ENCODE measurements at regions of chr5 and their contacts with region 1.

Region 1: DNA sequence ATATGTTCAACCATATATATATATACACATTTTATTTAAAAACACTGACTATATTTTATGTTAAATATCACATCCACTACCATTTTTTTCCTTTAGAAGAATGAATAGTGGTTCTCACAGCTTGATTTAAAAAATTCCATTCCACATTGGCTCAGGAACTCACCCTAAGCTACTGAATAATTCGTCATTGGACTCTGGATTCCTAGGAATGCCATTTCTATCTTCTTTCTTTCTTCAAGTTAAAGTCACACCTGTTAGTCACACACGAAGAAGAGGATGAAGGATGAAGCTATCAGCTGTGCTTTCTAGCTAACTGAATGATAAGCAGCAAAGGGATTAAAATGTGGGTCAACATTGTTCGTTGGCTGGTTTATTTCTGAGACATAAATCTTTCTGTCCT is 7.9 kb downstream of the ELOVL7 start:
- DNase-seq: no peak
- H3K4me3 ChIP-seq: no peak overlapping the region
- H3K4me3 Mint-ChIP-seq: no peak overlapping the region
- H3K27ac Mint-ChIP-seq: no peak overlapping the region
- H3K4me1 ChIP-seq: peaks cover 30% of the 10 kb centered on the region
- H3K4me1 Mint-ChIP-seq: peaks cover 26% of the 10 kb centered on the region
- H3K27me3 ChIP-seq: no peaks in the 10 kb centered on the region
- H3K27me3 Mint-ChIP-seq: no peaks in the 10 kb centered on the region
- CTCF ChIP-seq: no peak

Region 2: GRCh38 chr5:60704626-60705025 is 131.5 kb before region 1 on chr5:
- CTCF ChIA-PET with region 1: no interaction called
- POLR2A ChIA-PET with region 1: no interaction called
- intact Hi-C with region 1: no loop called
- DNase-seq: no peak
- H3K4me3 ChIP-seq: no peak overlapping the region
- H3K4me3 Mint-ChIP-seq: no peak overlapping the region
- H3K27ac Mint-ChIP-seq: no peak overlapping the region
- H3K4me1 ChIP-seq: peaks cover 13% of the 10 kb centered on the region
- H3K4me1 Mint-ChIP-seq: no peaks in the 10 kb centered on the region
- H3K27me3 ChIP-seq: no peaks in the 10 kb centered on the region
- H3K27me3 Mint-ChIP-seq: no peaks in the 10 kb centered on the region
- CTCF ChIP-seq: no peak

Region 3: GRCh38 chr5:60794691-60795090 is 41.4 kb before region 1 on chr5:
- CTCF ChIA-PET with region 1: no interaction called
- POLR2A ChIA-PET with region 1: no interaction called
- intact Hi-C with region 1: no loop called
- DNase-seq: no peak
- H3K4me3 ChIP-seq: no peak overlapping the region
- H3K4me3 Mint-ChIP-seq: no peak overlapping the region
- H3K27ac Mint-ChIP-seq: no peak overlapping the region
- H3K4me1 ChIP-seq: no peaks in the 10 kb centered on the region
- H3K4me1 Mint-ChIP-seq: no peaks in the 10 kb centered on the region
- H3K27me3 ChIP-seq: no peaks in the 10 kb centered on the region
- H3K27me3 Mint-ChIP-seq: no peaks in the 10 kb centered on the region
- CTCF ChIP-seq: no peak

Region 4: DNA sequence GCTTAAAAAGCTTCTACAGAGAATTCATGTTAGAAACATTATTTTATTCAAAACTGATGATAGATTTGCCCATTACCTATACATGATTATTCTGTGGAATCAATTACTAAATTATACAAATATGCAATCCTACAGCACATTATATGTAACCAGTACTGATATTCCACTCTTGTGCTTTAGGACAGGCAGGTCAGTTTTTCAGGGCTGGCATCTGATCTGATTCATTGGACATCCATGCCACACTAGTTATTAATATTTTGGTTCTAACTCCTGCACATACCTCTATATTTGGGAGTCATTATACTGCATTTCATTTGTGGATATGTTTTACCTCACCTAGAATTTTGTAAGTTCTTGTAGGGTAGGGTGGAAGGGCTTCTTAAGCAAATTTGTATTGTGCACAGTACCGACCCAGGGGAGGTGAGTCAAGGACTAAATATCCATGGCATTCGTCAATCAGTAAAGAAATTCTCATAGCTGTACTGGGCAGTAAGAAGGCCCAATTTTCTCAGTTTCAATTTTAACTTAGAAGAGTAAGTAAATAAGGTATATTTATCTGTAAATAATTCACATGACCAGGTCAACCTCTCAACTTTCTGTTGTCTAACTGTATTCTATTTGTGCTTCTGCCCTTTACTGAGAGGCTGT is 25.6 kb before region 1 on chr5:
- CTCF ChIA-PET with region 1: no interaction called
- POLR2A ChIA-PET with region 1: no interaction called
- intact Hi-C with region 1: loop called (anchors 2 kb)
- DNase-seq: peak in 1 of 2 experiments; percentile 26
- H3K4me3 ChIP-seq: no peak overlapping the region
- H3K4me3 Mint-ChIP-seq: peak overlapping the region; percentile 10
- H3K27ac Mint-ChIP-seq: peak overlapping the region; percentile 65
- H3K4me1 ChIP-seq: peaks cover 51% of the 10 kb centered on the region
- H3K4me1 Mint-ChIP-seq: peaks cover 41% of the 10 kb centered on the region
- H3K27me3 ChIP-seq: no peaks in the 10 kb centered on the region
- H3K27me3 Mint-ChIP-seq: no peaks in the 10 kb centered on the region
- CTCF ChIP-seq: no peak

Region 5: DNA sequence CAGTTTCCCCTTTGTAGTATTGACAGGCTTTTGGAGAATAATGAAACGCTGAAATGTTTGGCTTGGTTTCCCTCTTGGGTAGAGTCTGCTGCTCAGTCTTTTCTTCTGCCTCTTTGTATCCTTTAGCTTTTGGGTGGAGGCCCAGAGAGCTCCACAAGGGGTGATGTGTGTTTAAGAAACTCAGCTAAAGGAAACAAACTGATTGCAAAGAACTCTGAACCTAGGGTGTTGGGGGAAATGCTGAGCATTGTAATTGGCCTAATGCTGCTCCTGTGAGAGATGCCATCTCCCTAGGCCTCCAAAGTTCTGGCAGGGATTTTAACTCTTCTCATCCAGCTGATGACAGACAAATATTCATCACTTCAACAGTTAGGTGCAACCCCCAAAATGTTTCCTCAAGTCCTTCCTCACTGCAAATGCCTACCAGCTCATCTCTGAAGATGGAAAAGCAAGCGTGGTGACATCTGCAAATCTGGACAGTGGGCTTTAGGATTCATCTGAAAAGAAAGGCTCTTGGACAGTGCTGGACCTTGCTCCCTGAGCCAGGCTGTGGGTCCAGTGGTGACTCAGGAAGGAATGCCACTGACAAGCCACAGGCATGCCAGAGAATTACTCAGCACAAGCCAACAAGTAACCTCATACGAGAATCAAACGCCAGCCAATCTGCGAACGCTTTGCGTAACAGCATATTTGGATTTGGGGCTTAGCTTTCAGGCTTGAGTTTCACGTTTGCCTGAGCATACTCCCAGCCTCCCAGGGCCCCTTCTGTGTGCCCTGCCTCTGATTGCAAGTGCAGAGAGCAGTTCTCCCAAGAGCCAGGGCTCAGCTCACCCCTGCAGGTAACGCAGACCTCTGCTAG is 465.4 kb after region 1 on chr5:
- CTCF ChIA-PET with region 1: no interaction called
- POLR2A ChIA-PET with region 1: no interaction called
- intact Hi-C with region 1: no loop called
- DNase-seq: peak; percentile 89 to 93
- H3K4me3 ChIP-seq: no peak overlapping the region
- H3K4me3 Mint-ChIP-seq: peak overlapping the region; percentile 52
- H3K27ac Mint-ChIP-seq: peak overlapping the region; percentile 86
- H3K4me1 ChIP-seq: peaks cover 52% of the 10 kb centered on the region
- H3K4me1 Mint-ChIP-seq: peaks cover 34% of the 10 kb centered on the region
- H3K27me3 ChIP-seq: no peaks in the 10 kb centered on the region
- H3K27me3 Mint-ChIP-seq: no peaks in the 10 kb centered on the region
- CTCF ChIP-seq: no peak